Cardiac septum (tissue), 1 donor: ENCODE measurements at regions of chr6 and their contacts with region 1.

Region 1: DNA sequence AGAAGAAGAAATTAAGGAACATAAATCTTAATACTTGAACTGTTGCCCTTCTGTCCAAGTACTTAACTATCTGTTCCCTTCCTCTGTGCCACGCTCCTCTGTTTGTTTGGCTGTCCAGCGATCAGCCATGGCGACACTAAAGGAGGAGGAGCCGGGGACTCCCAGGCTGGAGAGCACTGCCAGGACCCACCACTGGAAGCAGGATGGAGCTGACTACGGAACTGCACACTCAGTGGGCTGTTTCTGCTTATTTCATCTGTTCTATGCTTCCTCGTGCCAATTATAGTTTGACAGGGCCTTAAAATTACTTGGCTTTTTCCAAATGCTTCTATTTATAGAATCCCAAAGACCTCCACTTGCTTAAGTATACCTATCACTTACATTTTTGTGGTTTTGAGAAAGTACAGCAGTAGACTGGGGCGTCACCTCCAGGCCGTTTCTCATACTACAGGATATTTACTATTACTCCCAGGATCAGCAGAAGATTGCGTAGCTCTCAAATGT is 17.1 kb downstream of the IRF4 start:
- DNase-seq: no peak

Region 2: GRCh38 chr6:219641-220198 is 188.9 kb before region 1 on chr6:
- intact Hi-C with region 1: loop called (anchors 10 kb)
- DNase-seq: peak; percentile 91

Region 3: DNA sequence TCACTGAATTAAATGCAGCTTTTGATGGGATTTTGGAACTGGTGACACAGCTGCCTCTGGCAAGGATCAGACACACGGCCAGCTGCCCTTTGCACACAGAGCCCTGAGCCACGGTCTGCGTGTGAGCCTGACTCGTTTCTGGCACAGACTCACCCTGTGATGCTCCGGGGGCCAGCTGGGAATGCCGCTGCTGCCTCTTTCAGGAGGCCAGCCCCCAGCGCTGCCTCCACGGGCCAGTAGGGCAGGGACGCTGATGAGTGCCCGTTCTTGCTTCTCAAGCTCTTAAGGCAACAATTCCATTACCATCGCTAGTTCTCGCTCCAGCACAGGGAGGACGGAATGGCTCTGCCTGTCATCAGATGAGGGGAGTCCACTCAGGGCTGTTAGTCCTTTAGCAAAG is 44.5 kb after region 1 on chr6:
- intact Hi-C with region 1: no loop called
- DNase-seq: peak; percentile 75